ENCODE measurements at regions of chr12 and their contacts with region 1.

Region 1: DNA sequence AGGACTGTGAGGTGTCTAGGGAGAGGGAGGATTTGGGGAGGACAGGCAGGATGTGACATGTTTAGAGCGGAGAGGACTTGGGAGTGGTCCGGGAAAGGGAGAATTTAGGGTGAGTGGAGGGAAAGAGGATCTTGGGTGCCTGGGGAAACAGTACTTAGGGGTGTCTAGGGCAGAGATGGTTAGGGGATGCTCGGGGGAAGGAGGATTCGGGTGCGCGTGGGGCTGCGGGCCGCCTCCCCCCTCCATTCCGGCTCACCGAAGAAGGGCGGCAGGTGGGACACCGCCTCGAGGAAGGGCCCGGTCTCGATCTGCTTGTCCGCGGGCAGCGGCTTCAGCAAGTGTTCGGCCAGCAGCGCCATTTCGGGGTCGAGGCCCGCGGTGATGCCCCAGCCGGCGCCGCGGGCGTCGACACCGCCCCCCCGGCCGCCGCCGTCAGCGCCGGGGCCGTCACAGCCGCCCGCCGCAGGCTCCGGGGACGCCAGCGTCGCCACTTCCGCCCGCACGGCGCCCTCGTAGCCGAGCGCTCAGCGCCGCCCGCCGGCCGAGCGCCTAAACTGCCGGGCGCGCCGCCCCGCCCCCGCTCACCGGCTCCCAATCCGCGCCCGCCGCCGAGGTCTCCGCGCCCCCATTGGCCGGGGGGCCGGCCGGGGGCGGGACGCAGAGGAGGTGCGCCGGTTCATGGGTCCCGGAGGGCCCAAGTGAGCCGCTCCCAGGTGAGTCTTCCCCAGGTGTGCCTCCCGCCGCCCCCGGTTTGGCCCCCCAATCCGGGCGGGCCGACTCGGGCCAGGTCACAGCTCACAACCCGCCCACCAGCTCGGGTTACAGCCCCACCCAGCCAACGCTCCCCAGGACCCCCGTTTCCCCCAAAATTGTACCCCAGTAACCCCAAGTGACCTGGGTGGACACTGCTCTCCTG is at the start of gene GLTP:
- DNase-seq: peak; percentile 70 to 87
- H3K4me3 ChIP-seq: peak within 1 kb of the TSS; percentile 77 to 90
- H3K27ac ChIP-seq: peak within 1 kb of the TSS; percentile 72 to 82
- H3K4me1 ChIP-seq: peaks cover 0 to 9% of the 10 kb centered on the region in 2 donors
- H3K27me3 ChIP-seq: no peaks in the 10 kb centered on the region
- CTCF ChIP-seq: peak in 3 of 4 experiments; percentile 85 to 99 (median 98)
- POLR2A ChIP-seq: peak; percentile 33 to 72
- total RNA-seq, gene GLTP: 8.7 to 53.9 (median 24.6) TPM

Region 2: DNA sequence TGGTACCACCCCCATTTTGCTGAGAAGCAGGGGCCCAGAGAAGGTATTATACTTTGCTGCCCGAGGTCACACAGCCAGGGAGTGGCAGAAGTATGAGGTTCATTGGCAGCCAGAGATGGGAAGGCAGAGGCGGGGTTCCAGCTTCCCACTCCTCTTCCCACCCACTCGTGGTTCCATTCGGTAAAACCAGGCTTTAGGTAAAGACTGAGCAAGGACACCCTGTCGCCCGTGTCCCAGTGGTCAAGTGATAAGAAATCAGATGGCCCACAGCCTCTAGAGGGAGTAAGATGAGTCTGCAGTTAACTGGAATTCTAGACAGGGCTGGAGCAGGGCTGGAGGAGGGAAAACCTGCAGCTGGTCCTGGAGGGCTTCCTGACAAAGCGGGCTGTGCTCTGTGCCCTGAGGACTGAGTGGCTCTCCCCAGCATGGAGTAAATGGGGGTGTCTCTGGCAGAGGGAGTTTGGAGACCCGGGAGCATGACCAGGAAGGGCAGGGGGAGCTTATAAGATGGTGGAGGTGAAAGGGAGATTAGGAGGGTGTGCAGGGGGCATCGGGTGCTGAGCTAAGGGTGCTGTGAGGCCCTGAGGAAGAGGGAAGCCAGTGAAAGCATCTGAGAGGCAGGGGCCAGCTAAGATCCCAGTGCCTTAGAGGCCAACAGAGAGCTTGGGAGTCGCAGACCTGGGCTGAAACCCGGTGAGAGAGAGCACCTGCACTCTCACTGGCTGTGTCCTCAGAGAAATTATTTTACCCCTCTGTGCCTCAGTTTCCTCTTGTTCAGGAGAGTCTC is 160.8 kb before region 1 on chr12:
- intact Hi-C with region 1: no loop called
- DNase-seq: no peak
- H3K4me3 ChIP-seq: no peak overlapping the region
- H3K27ac ChIP-seq: no peak overlapping the region
- H3K4me1 ChIP-seq: no peaks in the 10 kb centered on the region
- H3K27me3 ChIP-seq: peaks cover 0 to 8% of the 10 kb centered on the region in 2 donors
- CTCF ChIP-seq: no peak
- POLR2A ChIP-seq: no peak

Region 3: GRCh38 chr12:109804820-109805761 is 75.2 kb before region 1 on chr12:
- intact Hi-C with region 1: loop called (anchors 10 kb)
- DNase-seq: peak; percentile 45 to 57
- H3K4me3 ChIP-seq: no peak overlapping the region
- H3K27ac ChIP-seq: no peak overlapping the region
- H3K4me1 ChIP-seq: no peaks in the 10 kb centered on the region
- H3K27me3 ChIP-seq: no peaks in the 10 kb centered on the region
- CTCF ChIP-seq: peak; percentile 81 to 92 (median 86)
- POLR2A ChIP-seq: no peak